ENCODE measurements at regions of chr9 and their contacts with region 1.

Region 1: DNA sequence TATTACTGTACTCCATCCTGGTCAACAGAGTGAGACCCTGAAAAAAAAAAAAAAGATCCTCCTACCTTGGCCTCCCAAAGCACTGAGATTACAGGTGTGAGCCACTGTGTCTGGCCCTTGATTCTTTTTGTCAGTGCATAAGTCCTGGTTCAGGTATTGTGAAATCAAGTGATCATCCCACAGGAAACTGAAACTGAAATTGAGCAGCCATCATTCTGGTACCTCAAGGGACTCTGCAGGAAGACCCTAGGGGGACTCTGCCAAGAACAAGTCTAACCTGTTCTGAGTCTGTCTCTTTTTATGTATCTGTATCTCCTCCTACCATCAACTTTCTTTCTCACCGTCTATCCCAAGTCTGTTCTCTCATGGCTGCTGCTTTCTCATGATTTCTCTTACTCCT is 1.9 kb upstream of the DCAF10 start:
- DNase-seq: no peak
- ATAC-seq: no peak

Region 2: DNA sequence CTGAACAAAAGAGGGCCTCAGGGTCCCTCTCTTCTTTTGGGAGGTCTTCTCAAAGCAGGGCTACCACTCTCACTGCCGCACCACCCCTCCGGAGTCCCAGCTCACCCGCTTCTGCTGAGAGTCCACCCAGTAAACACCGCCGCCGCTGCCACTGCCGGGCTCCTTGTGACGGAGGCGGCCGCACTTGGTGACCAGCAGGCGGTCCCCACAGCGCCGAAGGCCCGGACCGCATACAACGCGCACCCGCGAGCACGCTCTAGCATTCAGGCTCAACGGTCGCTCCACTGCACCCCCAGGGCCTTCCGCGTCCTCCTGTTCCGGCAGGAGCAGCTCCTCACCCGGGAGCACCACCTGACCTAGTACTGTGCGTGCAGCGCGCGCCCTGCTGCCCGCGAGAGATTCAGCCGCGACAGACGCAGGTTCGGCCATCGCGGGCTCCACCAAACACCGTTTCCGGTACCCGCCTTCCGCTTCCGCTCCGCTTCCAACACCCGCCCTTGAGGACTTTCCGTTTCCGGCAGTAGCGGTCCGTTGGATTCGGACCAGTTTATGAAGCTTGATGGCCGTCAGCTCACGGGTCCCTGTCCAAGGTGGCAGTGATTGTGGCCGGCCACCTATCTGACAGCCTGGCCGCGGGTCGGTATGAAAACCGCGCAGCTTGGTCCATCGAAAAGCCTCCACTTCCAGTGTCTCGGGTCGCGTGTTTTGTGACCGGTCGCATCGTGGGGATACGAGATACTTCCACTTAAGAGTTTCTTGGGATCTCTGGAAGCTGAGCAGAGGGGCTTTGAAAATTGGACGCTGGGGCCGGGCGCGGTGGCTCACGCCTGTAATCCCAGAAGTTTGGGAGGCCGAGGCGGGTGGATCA is 13.8 kb before region 1 on chr9 and contains the start of gene EXOSC3:
- intact Hi-C with region 1: loop called (anchors 2 kb)
- DNase-seq: peak; percentile 93
- ATAC-seq: peak; percentile 99
- total RNA-seq, gene EXOSC3: 18.6 TPM

Measured in Right ventricle myocardium superior (tissue), 1 donor.